GM10248 (cell line): ENCODE measurements at regions of chr7 and their contacts with region 1.

Region 1: DNA sequence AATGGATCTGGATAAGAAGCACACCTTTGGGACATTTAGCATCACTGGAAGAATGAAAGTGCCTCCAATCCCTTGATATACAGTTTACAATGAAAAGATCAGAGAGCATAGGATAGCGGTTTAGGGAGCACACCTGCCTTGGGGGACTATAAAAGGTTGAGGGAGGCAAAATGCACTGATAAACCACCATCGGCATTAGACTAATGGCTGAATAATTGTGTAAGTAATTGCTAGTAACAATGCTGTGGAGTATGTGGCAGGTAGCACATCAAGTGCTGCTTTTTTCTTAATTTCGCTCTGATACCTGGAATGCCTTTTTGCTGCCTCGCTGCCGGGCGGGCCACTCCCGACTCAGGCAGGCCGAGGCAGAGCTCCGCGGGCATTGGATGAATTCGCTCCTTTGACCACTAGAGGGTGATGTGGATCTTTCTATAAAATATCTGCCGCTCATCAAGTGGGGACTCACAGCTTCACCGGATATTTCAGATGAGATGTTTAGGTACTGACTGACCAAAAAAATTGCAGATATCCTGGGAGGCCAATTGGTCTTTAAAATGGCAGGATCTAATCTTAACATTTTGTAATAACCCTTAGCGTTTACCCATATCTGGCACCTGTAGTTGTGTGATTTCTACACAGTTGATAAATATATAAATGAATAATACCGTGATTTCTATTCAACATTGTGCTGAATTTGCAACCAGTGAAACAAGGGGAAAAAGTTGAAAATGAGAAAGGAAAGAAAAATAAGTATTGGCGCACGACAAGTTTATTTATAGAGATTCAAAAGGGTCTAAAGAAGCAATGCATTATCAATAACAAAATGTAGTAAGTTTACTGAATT is 116.8 kb upstream of the PRSS1 start:
- DNase-seq: peak; percentile 79
- CTCF ChIP-seq: peak; percentile 79

Region 2: DNA sequence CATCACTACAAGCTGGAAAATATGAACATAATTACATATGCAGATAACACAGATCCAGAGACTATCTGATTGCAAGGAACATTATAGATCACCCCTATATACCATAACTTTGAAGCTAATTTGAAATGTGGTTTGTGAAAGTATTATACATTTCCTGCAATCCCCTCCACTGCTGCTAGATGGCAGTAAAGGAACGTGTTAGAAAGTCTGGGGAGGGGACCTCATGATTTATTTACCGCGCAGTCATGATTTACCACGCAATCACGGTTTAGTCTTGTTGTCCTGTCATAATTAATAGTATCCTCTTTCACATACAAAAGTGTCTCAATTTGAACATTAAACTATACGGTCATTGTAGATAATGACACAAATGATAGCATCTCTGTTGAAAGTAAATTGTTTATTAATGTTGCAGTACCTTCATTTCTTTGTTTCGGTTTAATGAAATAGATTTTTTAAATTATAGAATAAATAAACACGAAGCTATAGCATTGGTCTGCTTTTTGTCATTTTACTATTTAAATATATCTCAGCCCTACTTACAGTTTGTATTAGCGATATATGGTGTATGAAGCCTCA is 28.6 kb before region 1 on chr7:
- CTCF ChIA-PET with region 1: interaction called, 18 read pairs
- POLR2A ChIA-PET with region 1: no interaction called
- DNase-seq: peak; percentile 62
- CTCF ChIP-seq: peak; percentile 81

Region 3: DNA sequence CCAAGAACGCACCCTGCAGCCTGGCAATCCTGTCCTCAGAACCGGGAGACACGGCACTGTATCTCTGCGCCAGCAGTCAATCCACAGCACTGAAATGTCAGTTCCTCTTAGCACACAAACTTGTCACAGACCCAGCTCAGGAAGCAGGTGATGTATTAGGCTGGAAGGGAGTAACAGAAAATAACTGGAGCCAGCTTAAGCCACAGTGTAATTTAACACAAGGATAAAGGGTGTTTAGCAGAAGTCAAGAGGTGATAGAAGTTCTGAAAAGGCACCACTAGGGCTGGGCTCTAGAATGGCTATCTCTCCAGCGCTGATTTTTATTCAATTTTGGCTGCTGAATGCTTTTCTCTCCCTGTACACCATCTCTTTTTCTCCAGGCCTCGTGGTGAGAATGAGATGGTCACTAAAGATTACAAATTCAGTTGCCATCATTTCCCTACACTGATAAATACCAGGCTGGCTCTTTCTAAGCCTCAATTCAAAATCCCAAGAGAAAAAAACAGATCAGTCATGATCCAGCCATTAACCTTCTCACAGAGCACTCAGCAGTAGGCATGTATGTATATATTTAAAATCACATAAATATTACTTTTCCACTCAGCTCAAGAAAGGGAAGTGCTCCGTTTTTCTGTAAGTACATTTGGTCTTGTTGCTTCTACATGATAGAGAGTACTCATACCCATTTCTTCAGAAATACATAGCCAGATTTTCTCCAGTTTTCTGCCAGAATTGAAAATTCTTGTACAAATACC is 14.1 kb after region 1 on chr7:
- CTCF ChIA-PET with region 1: interaction called, 35 read pairs
- POLR2A ChIA-PET with region 1: no interaction called
- DNase-seq: no peak
- CTCF ChIP-seq: no peak

Region 4: GRCh38 chr7:142796608-142797385 is 164.3 kb after region 1 on chr7:
- CTCF ChIA-PET with region 1: interaction called, 214 read pairs
- POLR2A ChIA-PET with region 1: no interaction called
- DNase-seq: peak; percentile 43
- CTCF ChIP-seq: no peak

Region 5: DNA sequence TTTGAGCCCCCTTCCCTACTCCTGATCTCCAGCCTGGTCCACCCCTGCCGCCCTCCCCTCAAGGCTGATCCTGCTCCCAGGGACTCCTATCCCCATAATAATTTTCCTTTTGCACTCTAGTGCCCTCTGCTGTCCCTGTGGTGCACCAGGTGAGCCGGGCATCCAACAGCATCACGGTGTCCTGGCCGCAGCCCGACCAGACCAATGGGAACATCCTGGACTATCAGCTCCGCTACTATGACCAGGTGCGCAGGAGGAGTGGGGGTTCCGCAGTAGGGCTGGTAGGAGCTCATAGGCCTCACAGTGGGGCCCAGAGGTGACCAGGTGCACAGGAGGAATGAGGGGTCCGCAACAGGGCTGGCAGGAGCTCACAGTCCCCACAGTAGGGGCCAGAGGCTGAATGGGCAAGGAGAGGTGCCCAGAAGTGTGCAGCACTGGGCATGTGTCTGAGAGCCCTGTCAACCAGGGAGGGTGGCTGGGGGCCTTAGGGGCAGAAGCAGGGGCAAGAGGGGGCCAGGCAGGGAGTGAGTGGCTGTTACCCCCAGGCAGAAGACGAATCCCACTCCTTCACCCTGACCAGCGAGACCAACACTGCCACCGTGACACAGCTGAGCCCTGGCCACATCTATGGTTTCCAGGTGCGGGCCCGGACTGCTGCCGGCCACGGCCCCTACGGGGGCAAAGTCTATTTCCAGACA is 234.0 kb after region 1 on chr7:
- CTCF ChIA-PET with region 1: interaction called, 10 read pairs
- POLR2A ChIA-PET with region 1: no interaction called
- DNase-seq: no peak
- CTCF ChIP-seq: peak; percentile 70

Region 6: DNA sequence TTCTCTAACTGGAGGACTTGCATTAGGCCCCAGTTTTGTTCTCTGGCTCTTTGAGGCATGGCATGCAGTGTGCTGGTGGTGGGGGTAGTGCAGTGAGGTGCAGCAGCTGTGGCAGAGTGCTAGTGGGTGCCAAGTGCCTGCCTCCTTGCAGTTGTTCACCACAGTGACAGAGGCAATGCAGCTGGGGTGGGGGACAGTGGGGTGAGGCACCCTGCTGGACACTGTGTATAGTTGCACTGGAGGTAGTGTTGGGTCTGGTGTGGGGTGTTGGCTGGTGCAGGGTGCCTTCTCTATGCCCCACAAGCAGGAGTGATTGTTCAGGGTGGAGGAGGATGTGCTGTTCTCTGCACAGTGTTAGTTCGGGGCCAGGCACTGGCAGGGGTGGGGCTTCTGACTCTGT is 351.3 kb after region 1 on chr7:
- CTCF ChIA-PET with region 1: no interaction called
- POLR2A ChIA-PET with region 1: no interaction called
- DNase-seq: no peak
- CTCF ChIP-seq: no peak